ENCODE measurements at regions of chr11 and their contacts with region 1.

Region 1: DNA sequence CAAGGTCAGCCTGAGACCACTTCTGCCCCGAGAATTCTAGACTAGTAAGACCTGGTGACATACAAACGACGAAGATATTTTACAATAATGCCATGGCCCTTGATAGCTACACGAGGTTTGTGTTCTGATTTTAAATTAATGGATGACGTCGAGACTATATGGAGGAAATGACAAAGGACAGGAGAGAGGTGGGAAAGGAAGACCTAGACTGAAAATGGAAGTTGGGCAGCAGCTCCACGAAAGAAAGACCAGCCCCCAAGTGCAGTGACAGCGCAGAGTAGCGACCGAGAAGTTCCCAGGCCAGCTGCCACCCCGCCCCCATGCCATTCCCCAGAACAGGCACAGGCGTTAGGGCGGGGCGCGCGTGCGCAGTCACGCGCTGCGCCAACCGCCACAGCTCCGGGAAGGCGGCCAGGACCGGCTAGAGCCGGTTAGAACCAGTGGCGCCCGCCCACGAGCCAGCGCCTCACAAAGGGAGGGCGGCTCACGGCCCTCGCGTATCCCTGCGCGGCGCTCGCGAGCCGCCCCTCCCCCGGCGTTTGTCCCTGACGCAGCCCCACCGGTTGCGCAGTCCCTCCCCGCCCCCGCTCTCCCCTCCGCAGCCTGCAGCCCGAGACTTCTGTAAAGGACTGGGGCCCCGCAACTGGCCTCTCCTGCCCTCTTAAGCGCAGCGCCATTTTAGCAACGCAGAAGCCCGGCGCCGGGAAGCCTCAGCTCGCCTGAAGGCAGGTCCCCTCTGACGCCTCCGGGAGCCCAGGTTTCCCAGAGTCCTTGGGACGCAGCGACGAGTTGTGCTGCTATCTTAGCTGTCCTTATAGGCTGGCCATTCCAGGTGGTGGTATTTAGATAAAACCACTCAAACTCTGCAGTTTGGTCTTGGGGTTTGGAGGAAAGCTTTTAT is 1.5 kb upstream of the MALAT1 start:
- DNase-seq: peak; percentile 99
- ATAC-seq: peak; percentile 72
- H3K4me3 ChIP-seq: peak overlapping the region; percentile 95
- H3K27ac ChIP-seq: peak overlapping the region; percentile 95
- H3K4me1 ChIP-seq: peaks cover 48% of the 10 kb centered on the region
- H3K27me3 ChIP-seq: no peaks in the 10 kb centered on the region
- CTCF ChIP-seq: no peak

Region 2: GRCh38 chr11:64553551-64554201 is 943.7 kb before region 1 on chr11:
- CTCF ChIA-PET with region 1: no interaction called
- POLR2A ChIA-PET with region 1: interaction called, 13 read pairs
- intact Hi-C with region 1: no loop called
- DNase-seq: peak; percentile 65
- ATAC-seq: peak; percentile 54
- H3K4me3 ChIP-seq: no peak overlapping the region
- H3K27ac ChIP-seq: no peak overlapping the region
- H3K4me1 ChIP-seq: peaks cover 5% of the 10 kb centered on the region; the same call in 1 of the 2 replicates
- H3K27me3 ChIP-seq: peaks cover 6% of the 10 kb centered on the region; the same call in 1 of the 2 replicates
- CTCF ChIP-seq: peak; percentile 98

Region 3: DNA sequence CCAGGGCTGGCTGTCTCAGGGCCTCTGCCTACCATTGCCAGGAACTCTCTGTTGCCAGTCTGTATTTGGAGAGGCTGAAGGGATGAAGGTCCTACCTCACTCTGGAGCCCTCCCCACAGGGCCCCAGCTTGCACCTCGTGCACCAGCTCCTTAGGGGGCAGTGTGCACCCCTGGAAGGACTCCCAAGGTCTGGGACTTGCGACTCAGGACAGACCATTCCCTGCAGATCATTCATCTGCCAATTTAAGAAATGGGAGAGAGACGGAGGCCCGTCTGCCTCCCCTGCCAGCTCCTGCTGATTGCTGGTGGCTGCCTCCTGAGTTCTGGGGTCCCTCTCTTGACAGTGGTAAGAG is 26.0 kb before region 1 on chr11:
- CTCF ChIA-PET with region 1: interaction called, 3 read pairs
- POLR2A ChIA-PET with region 1: interaction called, 40 read pairs
- intact Hi-C with region 1: loop called (anchors 2 kb)
- DNase-seq: peak; percentile 59
- ATAC-seq: peak; percentile 30
- H3K4me3 ChIP-seq: peak overlapping the region; percentile 5; the same call in 1 of the 2 replicates
- H3K27ac ChIP-seq: peak overlapping the region; percentile 95
- H3K4me1 ChIP-seq: peaks cover 36% of the 10 kb centered on the region
- H3K27me3 ChIP-seq: no peaks in the 10 kb centered on the region
- CTCF ChIP-seq: peak; percentile 66

Region 4: DNA sequence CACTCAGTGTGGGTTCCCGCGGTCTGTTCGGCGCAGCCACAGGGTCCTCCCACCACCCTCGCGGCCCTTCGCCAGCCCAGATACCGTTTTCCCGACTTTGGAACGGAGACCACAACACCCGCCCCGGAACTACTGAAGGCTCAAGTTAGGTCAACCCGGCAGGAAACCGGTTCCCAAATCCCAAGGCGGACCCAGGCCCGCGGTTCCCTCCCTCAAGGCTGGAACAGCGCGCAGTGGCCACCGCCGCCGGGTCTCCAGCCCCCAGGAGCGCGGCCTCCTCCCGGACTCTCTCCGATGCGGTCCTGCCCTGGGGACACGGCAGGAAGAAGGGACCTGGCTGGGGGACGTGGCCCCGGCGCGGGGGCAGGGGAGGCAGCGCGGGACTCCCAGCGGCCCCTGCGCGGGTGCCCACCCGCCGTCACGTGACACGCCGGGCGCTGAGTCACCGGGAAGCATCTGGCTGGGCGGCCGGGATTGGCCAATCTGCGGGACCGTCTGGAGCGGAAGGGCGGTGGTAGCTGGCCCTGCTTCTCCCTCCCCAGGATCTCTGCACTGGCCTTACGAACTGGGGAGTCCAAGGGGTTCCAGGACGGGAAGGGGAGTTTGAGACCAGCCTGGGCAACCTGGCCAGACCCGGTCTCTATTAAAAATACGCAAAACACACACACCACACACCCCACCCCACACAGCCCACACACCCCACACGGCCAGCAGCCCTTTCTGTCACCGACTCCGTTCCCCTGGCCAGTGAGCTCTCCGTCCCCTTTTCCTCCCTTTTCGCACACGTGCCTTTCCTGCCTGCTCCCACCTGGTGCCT is 20.0 kb before region 1 on chr11:
- CTCF ChIA-PET with region 1: interaction called, 5 read pairs
- POLR2A ChIA-PET with region 1: interaction called, 40 read pairs
- intact Hi-C with region 1: loop called (anchors 2 kb)
- DNase-seq: peak; percentile 97
- ATAC-seq: peak; percentile 81
- H3K4me3 ChIP-seq: peak overlapping the region; percentile 80
- H3K27ac ChIP-seq: peak overlapping the region; percentile 95
- H3K4me1 ChIP-seq: peaks cover 40% of the 10 kb centered on the region
- H3K27me3 ChIP-seq: no peaks in the 10 kb centered on the region
- CTCF ChIP-seq: no peak

Region 5: GRCh38 chr11:66056501-66056900 is 559.1 kb after region 1 on chr11:
- CTCF ChIA-PET with region 1: no interaction called
- POLR2A ChIA-PET with region 1: no interaction called
- intact Hi-C with region 1: no loop called
- DNase-seq: no peak
- ATAC-seq: no peak
- H3K4me3 ChIP-seq: no peak overlapping the region
- H3K27ac ChIP-seq: no peak overlapping the region
- H3K4me1 ChIP-seq: peaks cover 8% of the 10 kb centered on the region
- H3K27me3 ChIP-seq: no peaks in the 10 kb centered on the region
- CTCF ChIP-seq: no peak

Measured in PC-3 (cell line).